ENCODE measurements at regions of chr13 and their contacts with region 1.

Region 1: DNA sequence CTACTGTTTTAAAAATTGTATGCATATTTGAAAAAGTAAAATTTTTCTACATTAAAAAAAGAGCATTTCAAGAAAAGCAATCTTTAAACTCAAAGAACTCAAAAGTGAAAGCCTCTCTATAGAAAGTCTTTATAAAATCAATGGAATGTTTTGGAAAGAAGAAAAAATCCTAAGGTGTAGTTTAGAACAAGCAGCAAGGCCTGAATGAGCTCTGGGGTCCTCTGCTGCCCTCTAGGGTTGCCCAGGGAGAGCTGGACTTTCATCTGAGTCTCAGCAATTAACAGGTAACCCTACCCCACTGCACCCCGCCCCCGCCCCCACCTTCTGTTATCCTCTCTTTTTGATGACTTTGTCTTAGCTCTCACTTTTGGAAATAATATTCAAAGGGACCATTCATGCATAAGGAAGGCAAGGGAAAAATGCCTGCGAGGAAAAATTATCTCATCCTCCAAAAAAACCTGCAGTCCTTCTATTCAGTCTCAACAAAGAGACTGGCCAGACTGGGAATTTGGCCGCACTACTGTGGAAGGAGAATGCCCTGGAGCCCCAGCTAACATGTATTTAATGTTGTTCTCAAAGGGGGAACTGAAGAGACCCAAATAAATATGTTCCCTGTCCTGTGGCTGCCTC is 24.1 kb downstream of the SLC25A30 start:
- DNase-seq: peak; percentile 74
- H3K4me3 Mint-ChIP-seq: no peak overlapping the region
- H3K27ac Mint-ChIP-seq: no peak overlapping the region
- H3K4me1 Mint-ChIP-seq: no peaks in the 10 kb centered on the region
- H3K27me3 Mint-ChIP-seq: no peaks in the 10 kb centered on the region
- CTCF ChIP-seq: peak; percentile 71

Region 2: DNA sequence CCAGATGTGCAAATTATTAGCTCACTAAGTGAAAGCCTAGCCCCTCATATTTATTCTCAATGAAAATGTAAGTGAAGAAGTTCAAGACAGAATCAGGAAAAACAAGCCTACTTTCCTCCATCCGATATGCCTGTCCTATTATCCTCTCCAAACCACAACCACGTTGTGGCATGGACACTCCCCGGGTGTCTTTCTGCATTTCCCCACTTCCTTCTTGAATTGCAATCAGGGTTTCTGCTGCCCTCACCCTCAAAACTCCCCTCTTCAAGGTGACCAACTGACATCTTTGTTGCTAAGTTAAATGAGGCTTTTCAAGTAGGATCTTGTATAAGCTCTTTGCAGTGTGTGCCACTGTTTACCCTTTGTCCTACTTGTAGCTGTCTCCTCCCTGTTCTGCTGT is 12.4 kb after region 1 on chr13:
- CTCF ChIA-PET with region 1: interaction called, 13 read pairs
- POLR2A ChIA-PET with region 1: interaction called, 5 read pairs
- intact Hi-C with region 1: no loop called
- DNase-seq: no peak
- H3K4me3 Mint-ChIP-seq: no peak overlapping the region
- H3K27ac Mint-ChIP-seq: peak overlapping the region; percentile 47
- H3K4me1 Mint-ChIP-seq: peaks cover 5% of the 10 kb centered on the region
- H3K27me3 Mint-ChIP-seq: no peaks in the 10 kb centered on the region
- CTCF ChIP-seq: no peak

Region 3: DNA sequence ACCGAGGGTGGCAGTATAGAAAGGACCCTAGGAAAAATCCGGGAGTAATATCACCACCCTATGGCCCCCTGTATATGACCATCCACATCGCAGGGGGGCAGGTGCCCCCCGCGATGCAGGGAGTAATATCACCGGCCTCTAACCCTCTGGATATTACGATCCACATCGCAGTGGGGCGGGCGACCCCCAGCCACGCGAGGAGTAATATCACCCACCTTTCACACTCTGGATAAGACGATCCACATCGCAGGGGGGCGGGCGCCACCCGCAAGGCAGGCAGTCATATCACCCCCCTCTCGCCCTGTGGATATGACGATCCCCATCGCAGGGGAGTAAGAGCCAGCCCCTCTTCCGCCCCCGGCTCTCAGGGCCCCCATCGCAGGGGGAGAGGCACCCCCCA is 1069.7 kb after region 1 on chr13:
- CTCF ChIA-PET with region 1: no interaction called
- POLR2A ChIA-PET with region 1: no interaction called
- intact Hi-C with region 1: no loop called
- DNase-seq: no peak
- H3K4me3 Mint-ChIP-seq: no peak overlapping the region
- H3K27ac Mint-ChIP-seq: no peak overlapping the region
- H3K4me1 Mint-ChIP-seq: no peaks in the 10 kb centered on the region
- H3K27me3 Mint-ChIP-seq: no peaks in the 10 kb centered on the region
- CTCF ChIP-seq: no peak